Activated naive CD4-positive, alpha-beta T cell treated with anti-CD3 and anti-CD28 coated beads for 36 hours (primary cell): ENCODE measurements at regions of chr11 and their contacts with region 1.

Region 1: DNA sequence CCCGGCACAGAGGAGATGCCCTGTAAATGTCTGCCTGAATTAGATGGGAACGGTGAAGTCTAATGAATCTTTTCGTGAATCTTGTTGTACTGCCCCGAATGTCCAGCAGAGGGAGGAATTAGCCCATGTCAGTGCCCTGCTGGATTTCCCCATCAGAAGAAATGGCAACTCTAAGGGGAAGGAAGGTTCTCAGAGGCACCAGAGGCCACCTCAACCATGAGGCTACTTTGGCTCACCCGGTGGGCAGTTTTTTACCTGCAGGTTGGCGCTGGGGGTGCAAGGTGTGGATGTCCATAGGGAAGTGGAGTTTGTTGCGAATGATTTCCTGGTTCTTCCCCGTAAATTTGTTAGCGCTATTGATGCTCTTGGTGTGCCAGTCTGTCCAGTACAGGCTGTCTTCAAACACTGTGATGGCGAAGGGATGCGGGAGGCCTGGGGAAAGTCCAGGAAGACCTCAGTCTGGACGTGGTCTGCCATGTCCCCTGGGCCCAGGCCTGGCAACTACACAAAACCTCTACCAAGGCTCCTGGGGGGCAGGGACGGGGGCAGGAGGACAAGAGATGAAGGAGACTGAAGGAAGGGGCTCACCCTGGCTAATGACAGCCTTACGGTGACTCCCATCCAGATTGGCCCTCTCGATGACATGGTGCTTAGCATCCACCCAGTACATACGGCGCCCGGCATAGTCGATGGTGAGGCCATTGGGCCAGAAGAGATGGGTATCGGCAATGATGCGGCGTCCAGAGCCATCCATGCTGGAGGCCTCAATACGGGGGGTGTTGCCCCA is 28.5 kb downstream of the LRP4 start:
- DNase-seq: peak; percentile 90
- H3K4me3 Mint-ChIP-seq: no peak overlapping the region
- H3K27ac Mint-ChIP-seq: no peak overlapping the region
- H3K4me1 Mint-ChIP-seq: peaks cover 2% of the 10 kb centered on the region
- H3K27me3 Mint-ChIP-seq: no peaks in the 10 kb centered on the region

Region 2: GRCh38 chr11:46808799-46809431 is 81.0 kb before region 1 on chr11:
- CTCF ChIA-PET with region 1: no interaction called
- intact Hi-C with region 1: no loop called
- DNase-seq: no peak
- H3K4me3 Mint-ChIP-seq: no peak overlapping the region
- H3K27ac Mint-ChIP-seq: no peak overlapping the region
- H3K4me1 Mint-ChIP-seq: peaks cover 4% of the 10 kb centered on the region
- H3K27me3 Mint-ChIP-seq: no peaks in the 10 kb centered on the region

Region 3: GRCh38 chr11:46874586-46874985 is 15.3 kb before region 1 on chr11:
- CTCF ChIA-PET with region 1: no interaction called
- intact Hi-C with region 1: no loop called
- DNase-seq: no peak
- H3K4me3 Mint-ChIP-seq: no peak overlapping the region
- H3K27ac Mint-ChIP-seq: no peak overlapping the region
- H3K4me1 Mint-ChIP-seq: no peaks in the 10 kb centered on the region
- H3K27me3 Mint-ChIP-seq: peaks cover 2% of the 10 kb centered on the region

Region 4: DNA sequence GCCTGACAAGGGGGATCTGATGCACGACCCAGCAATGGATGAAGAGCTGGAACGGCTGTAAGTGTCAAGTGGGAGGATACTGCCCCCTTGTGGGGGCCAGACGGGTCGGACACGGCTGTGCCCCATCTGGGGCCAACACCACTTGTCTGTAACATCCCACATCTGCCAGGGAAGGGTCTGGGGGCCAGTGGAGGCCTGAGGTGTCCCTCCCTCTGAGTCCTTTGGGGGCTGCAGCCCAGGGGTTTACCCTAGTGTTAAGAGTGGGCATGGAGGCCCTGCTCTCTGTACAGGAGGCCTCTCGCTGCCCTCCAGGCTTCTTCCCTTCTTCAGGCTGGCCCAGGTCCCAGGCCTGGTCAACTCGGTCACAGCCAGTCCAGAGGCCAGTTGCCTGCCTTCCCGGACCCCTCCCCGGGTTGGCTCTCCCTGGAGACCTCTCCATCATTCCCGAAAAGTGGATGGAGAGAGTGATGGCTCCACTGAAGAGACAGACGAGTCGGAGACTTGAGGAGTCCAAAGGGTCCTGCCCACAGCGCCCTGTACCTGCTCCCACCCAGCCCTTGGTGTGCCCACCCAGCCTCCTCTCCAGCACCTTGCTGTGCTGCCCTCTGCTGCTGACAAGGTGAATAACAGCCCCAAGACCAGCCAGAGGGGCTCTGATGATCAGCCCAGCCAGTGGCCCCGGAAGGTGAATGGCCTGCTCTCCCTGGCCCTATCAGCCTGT is 271.4 kb after region 1 on chr11:
- CTCF ChIA-PET with region 1: interaction called, 5 read pairs
- intact Hi-C with region 1: loop called (anchors 1 kb)
- DNase-seq: peak; percentile 67
- H3K4me3 Mint-ChIP-seq: no peak overlapping the region
- H3K27ac Mint-ChIP-seq: no peak overlapping the region
- H3K4me1 Mint-ChIP-seq: no peaks in the 10 kb centered on the region
- H3K27me3 Mint-ChIP-seq: no peaks in the 10 kb centered on the region

Region 5: GRCh38 chr11:47305734-47306483 is 416.0 kb after region 1 on chr11:
- CTCF ChIA-PET with region 1: no interaction called
- intact Hi-C with region 1: no loop called
- DNase-seq: no peak
- H3K4me3 Mint-ChIP-seq: no peak overlapping the region
- H3K27ac Mint-ChIP-seq: no peak overlapping the region
- H3K4me1 Mint-ChIP-seq: peaks cover 11% of the 10 kb centered on the region
- H3K27me3 Mint-ChIP-seq: no peaks in the 10 kb centered on the region